Pancreas (tissue), 10 donors: ENCODE measurements at regions of chr12 and their contacts with region 1.

Region 1: GRCh38 chr12:96061864-96062453 is 26.6 kb upstream of the LTA4H start:
- DNase-seq: peak in 5 of 6 donors; percentile 52 to 76 (median 55)
- ATAC-seq: peak; percentile 84 to 98 (median 96)
- H3K4me3 ChIP-seq: no peak overlapping the region
- H3K27ac ChIP-seq: no peak overlapping the region
- H3K4me1 ChIP-seq: no peaks in the 10 kb centered on the region
- H3K27me3 ChIP-seq: no peaks in the 10 kb centered on the region
- CTCF ChIP-seq: peak; percentile 42 to 72 (median 72)

Region 2: DNA sequence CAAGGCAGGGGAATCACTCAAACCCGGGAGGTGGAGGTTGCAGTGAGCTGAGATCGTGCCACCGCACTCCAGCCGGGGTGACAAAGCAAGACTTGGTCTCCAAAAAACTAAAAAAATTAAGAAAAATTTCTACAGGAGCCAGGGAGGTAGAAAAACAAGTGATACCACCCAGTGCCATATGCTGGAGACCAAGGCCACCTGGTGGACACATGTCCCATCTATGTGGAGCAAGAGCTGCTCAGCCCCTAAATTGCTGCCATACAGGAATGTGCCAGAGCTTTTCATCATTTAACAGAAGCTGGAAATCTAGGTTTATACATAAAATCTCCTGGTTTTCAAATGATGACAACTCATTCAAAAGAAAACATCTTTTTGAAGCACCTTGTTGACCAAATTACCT is 70.9 kb after region 1 on chr12:
- intact Hi-C with region 1: no loop called
- DNase-seq: no peak
- ATAC-seq: peak in 2 of 4 donors; percentile 53 to 62
- H3K4me3 ChIP-seq: no peak overlapping the region
- H3K27ac ChIP-seq: no peak overlapping the region
- H3K4me1 ChIP-seq: peaks cover 0 to 5% (median 0%) of the 10 kb centered on the region in 3 donors
- H3K27me3 ChIP-seq: no peaks in the 10 kb centered on the region
- CTCF ChIP-seq: peak in 1 of 4 donors; percentile 13

Region 3: GRCh38 chr12:96219698-96220206 is 157.8 kb after region 1 on chr12:
- intact Hi-C with region 1: loop called in 2 of 3 experiments (anchors 5 to 10 kb)
- DNase-seq: no peak
- ATAC-seq: peak in 1 of 4 donors; percentile 17
- H3K4me3 ChIP-seq: no peak overlapping the region
- H3K27ac ChIP-seq: no peak overlapping the region
- H3K4me1 ChIP-seq: peaks cover 0 to under 1% (median 0%) of the 10 kb centered on the region in 3 donors
- H3K27me3 ChIP-seq: no peaks in the 10 kb centered on the region
- CTCF ChIP-seq: no peak

Region 4: GRCh38 chr12:96516472-96517430 is 454.8 kb after region 1 on chr12:
- intact Hi-C with region 1: loop called (anchors 5 to 10 kb)
- DNase-seq: peak in 5 of 6 donors; percentile 22 to 81 (median 59)
- ATAC-seq: peak; percentile 60 to 88 (median 84)
- H3K4me3 ChIP-seq: no peak overlapping the region
- H3K27ac ChIP-seq: no peak overlapping the region
- H3K4me1 ChIP-seq: no peaks in the 10 kb centered on the region
- H3K27me3 ChIP-seq: peaks cover 0 to 3% (median 0%) of the 10 kb centered on the region in 4 donors
- CTCF ChIP-seq: peak in 2 of 4 donors; percentile 48 to 51